ENCODE measurements at regions of chr3 and their contacts with region 1.

Region 1: GRCh38 chr3:177787279-177788041 is 590.2 kb upstream of the TBL1XR1 start:
- DNase-seq: peak; percentile 61
- H3K4me3 Mint-ChIP-seq: no peak overlapping the region
- H3K27ac Mint-ChIP-seq: peak overlapping the region; percentile 60
- H3K4me1 Mint-ChIP-seq: peaks cover 14% of the 10 kb centered on the region
- H3K27me3 Mint-ChIP-seq: no peaks in the 10 kb centered on the region

Region 2: GRCh38 chr3:177057768-177058167 is 729.7 kb before region 1 on chr3:
- intact Hi-C with region 1: loop called (anchors 5 kb)
- DNase-seq: peak; percentile 76
- H3K4me3 Mint-ChIP-seq: no peak overlapping the region
- H3K27ac Mint-ChIP-seq: no peak overlapping the region
- H3K4me1 Mint-ChIP-seq: peaks cover 19% of the 10 kb centered on the region
- H3K27me3 Mint-ChIP-seq: no peaks in the 10 kb centered on the region

Region 3: GRCh38 chr3:177345049-177345972 is 442.1 kb before region 1 on chr3:
- intact Hi-C with region 1: loop called (anchors 5 kb)
- DNase-seq: peak; percentile 90
- H3K4me3 Mint-ChIP-seq: peak overlapping the region; percentile 47
- H3K27ac Mint-ChIP-seq: peak overlapping the region; percentile 97
- H3K4me1 Mint-ChIP-seq: peaks cover 35% of the 10 kb centered on the region
- H3K27me3 Mint-ChIP-seq: peaks cover 2% of the 10 kb centered on the region

Region 4: DNA sequence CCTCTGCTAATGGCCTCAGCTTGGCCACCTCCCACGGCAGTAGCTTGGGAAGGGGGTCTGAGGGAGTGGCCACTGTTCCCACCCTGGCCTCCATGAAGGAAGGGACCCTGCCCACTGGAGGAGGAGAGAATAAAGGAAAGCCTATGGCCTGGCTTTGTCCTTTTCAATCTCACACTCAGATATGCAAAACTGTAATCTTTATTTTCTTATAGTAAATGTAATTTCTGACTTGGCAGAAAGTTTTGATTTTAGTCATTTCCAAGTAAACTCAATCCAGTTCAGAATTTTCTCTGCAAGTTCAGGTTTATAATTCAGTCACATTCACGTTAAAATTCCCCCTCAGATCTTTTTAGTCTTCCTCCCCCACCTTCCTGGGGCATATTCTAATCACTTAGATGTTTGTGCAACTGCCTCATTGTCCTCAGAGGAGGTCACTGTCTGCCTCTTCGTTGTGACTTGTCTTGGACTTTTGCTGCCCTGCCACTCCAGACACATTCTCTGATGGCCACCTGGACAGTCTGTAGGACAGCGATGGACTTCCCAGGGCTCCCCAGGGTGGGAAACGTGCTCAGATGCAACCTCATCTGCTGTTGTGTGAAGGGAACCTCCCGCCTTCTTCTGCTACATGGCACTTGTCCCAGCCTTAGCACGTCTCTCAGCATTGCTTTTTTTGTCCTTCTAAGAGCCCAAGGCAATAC is 367.4 kb before region 1 on chr3:
- intact Hi-C with region 1: loop called (anchors 1 kb)
- DNase-seq: peak; percentile 60
- H3K4me3 Mint-ChIP-seq: no peak overlapping the region
- H3K27ac Mint-ChIP-seq: peak overlapping the region; percentile 79
- H3K4me1 Mint-ChIP-seq: peaks cover 20% of the 10 kb centered on the region
- H3K27me3 Mint-ChIP-seq: no peaks in the 10 kb centered on the region

Region 5: DNA sequence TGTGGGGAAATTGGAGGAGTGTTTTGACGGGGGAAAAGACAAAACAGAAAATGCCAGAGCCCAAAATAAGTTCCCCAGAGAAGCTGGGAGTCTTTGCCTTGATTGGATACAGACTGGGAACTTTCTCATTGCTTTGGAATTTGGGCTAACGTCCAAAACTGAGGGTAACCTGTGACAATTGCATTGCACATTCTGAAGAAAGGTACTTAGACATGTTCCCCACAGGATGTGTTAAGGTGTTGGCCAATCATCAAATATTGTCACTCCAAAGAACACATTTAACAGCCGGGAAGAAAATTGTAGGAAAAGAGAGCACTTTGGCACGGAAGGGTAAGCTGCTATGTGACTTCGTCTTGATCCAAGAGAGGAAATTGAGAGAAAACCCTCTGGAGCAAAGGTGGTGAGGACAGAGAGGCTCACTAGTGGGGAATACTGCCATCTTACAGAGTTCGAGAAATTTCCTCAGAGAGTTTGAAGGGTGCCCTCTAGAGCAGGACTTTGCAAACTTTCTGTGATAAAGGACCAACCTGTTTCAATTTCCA is 29.3 kb after region 1 on chr3:
- intact Hi-C with region 1: loop called (anchors 2 kb)
- DNase-seq: no peak
- H3K4me3 Mint-ChIP-seq: no peak overlapping the region
- H3K27ac Mint-ChIP-seq: no peak overlapping the region
- H3K4me1 Mint-ChIP-seq: peaks cover 9% of the 10 kb centered on the region
- H3K27me3 Mint-ChIP-seq: no peaks in the 10 kb centered on the region

Region 6: DNA sequence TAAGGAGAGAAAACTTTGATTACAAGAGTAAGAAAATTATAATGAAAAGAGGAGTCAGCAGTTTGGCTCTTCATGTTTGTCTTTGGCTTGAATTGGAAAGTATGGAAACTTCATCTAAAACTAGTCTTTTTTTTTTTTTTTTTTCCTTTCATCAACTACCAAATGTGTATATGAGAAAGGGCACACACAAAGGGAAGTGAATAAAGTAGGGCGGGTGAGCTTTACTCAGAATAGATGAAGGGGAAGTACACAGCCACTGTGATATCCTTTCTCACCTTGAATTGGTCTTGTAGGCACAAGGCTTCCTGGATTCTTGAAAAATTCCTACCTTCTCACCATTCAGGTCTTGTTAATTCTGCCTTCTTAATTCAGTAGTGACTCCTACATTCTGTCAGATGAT is 96.5 kb after region 1 on chr3:
- intact Hi-C with region 1: loop called (anchors 5 kb)
- DNase-seq: no peak
- H3K4me3 Mint-ChIP-seq: no peak overlapping the region
- H3K27ac Mint-ChIP-seq: no peak overlapping the region
- H3K4me1 Mint-ChIP-seq: peaks cover 12% of the 10 kb centered on the region
- H3K27me3 Mint-ChIP-seq: no peaks in the 10 kb centered on the region

Region 7: GRCh38 chr3:177959188-177959587 is 171.7 kb after region 1 on chr3:
- intact Hi-C with region 1: no loop called
- DNase-seq: no peak
- H3K4me3 Mint-ChIP-seq: no peak overlapping the region
- H3K27ac Mint-ChIP-seq: no peak overlapping the region
- H3K4me1 Mint-ChIP-seq: no peaks in the 10 kb centered on the region
- H3K27me3 Mint-ChIP-seq: no peaks in the 10 kb centered on the region

Region 8: DNA sequence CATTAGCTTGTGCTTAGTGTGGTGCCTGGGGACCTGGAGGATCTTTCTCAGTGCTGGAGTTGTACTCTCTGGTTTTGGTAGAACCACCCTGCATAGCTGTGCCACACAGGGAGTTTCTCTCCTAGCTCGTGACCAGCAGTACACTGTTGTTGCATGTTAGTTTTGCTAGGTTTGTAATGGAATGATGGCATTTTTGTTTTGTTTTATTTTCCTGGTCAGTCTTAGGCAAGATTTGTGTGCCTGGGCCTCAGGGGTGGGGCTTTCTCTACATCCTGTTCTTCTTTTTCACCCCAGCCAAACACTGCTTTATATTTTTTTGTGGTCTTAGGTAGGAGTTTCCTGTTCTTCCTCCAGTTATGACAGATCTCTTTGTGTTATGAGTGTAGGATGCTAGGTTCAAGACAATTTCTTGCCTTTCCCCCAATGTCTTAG is 214.2 kb after region 1 on chr3:
- intact Hi-C with region 1: loop called (anchors 2 kb)
- DNase-seq: peak; percentile 77
- H3K4me3 Mint-ChIP-seq: peak overlapping the region; percentile 63
- H3K27ac Mint-ChIP-seq: peak overlapping the region; percentile 91
- H3K4me1 Mint-ChIP-seq: peaks cover 36% of the 10 kb centered on the region
- H3K27me3 Mint-ChIP-seq: no peaks in the 10 kb centered on the region

Measured in activated CD4-positive, alpha-beta T cell treated with anti-CD3 and anti-CD28 coated beads, Interleukin-2, amount 10 ng/mL, durations not matched to agents 24 days and 14 days (primary cell).